Sciatic nerve (tissue), 2 donors: ENCODE measurements at regions of chr1 and their contacts with region 1.

Region 1: DNA sequence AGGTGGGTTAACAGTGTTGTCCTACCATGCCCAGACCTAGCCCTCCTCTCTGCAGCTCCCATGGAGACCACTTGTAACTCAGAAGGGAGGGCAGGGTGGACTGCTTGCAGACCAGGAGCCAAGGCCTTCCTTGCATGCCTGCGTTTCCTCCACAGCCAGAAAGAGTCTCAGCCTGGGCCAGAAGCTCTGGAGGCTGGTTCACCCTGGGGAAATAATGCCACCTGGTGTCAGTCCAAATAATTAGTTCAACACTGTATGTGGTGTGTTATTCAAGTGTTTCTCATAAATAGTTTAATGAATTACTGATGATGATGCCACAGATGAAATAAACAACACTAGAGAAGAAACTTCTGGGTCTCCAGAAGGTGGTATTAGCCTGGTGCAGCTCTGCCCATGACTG is 16.9 kb upstream of the VANGL1 start:
- DNase-seq: no peak
- ATAC-seq: no peak

Region 2: DNA sequence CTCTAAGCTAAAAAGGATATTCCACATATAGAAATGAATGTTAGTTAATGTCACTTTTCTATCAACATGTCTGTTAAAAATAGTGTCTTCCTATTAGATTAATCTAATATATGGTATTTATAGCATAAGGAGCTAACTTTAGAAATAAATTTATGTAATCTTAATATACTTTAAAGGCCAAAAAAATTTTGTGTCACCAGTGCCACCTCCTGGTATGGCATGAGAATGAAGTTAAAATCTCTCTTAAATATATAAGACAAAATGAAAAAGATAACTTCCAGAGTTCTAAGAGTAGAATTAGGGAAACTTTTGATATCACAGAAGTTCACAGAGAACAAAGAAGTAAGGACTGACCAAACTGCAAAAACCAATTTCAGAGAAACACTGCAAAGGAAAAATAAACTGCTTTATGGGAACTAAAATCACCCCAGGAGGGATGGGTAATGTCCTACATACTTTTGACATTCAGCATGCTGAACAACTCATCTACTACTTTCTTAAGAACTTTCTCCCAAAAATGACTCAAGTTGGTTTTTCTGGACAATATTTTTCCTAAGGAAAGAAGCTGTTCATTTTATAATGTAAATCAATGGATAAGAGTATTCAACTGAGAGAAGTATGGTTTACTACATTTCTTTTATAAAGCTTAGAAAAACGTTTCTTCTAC is 1196.6 kb before region 1 on chr1:
- intact Hi-C with region 1: no loop called
- DNase-seq: no peak
- ATAC-seq: no peak

Region 3: DNA sequence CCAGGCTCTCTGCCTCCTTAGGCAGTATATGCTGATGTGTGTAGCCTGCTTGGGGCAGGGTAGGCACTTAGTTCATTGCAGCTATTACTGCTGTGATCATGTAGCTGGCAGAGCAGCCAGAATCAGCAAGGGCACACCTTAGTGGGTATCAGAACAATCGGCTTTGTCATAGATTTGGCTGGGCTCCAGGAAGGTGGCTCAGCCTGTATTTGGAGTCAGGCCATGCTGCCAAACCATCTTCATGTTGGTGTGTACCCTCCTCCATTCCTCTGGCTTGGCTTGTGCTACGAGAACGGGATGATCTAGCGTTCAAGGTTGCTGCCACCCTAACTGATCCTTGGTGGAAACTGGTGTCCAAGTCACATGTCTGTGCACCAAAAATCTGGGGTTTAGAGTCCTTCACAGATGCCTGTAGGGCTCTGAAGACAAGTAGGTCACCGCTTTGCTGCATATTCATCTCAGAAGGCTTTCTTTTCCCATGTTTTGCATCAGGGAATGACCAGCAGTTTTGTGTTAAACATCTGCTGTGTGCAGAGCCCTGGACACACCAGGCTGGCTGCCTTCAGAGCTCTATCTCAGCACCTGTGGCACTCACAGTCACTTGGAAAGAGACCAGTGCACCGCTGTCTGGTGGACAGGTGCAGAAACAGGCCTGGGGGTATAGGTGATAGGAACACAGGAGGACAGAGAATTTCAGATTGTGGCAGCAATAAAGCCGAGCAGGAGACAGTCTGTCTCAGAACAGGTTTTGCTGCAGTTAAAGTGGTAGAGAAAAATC is 40.6 kb after region 1 on chr1:
- intact Hi-C with region 1: loop called (anchors 2 kb)
- DNase-seq: no peak
- ATAC-seq: no peak

Region 4: GRCh38 chr1:116001739-116002487 is 377.1 kb after region 1 on chr1:
- intact Hi-C with region 1: loop called (anchors 5 kb)
- DNase-seq: no peak
- ATAC-seq: no peak